ENCODE measurements at regions of chr11 and their contacts with region 1.

Region 1: DNA sequence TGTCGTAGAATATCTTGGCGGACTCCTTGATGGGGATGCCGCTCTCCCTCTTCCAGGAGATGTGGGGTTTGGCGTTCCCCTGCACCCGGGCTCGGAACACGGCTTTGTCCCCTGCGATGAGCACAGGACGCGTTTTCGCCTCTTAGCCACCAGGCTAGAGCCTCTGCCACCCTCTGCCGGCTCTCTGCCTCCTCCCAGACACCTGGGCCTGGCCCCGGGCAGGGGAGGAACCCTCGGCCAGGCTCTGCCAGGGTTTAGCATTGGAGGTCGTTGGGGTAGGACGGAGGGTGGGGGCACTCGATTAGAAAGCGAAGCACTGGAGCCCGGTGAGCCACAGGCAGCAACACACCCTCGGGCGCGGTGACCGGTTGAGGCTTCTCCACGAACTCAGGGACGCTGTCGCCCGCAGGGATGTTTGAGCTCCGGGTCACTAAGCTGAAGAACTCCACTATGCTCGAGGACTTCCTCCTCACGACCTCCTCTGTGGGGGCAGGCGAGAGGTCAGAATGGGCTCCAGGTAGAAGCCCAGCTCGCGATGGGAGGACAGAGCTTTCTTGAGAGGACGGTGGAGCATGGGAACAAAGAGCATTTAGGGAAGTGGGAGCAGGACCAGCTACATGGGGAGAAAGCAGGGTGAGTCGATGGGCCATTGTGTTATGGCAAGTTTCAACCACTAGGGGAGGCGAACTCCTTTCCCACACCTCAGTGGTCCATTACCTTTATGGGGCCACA is 4.3 kb downstream of the IGSF22 start:
- DNase-seq: peak; percentile 55
- H3K4me3 Mint-ChIP-seq: peak overlapping the region; percentile 73
- H3K27ac Mint-ChIP-seq: no peak overlapping the region
- H3K4me1 Mint-ChIP-seq: peaks cover 3% of the 10 kb centered on the region
- H3K27me3 Mint-ChIP-seq: peaks cover 8% of the 10 kb centered on the region

Region 2: DNA sequence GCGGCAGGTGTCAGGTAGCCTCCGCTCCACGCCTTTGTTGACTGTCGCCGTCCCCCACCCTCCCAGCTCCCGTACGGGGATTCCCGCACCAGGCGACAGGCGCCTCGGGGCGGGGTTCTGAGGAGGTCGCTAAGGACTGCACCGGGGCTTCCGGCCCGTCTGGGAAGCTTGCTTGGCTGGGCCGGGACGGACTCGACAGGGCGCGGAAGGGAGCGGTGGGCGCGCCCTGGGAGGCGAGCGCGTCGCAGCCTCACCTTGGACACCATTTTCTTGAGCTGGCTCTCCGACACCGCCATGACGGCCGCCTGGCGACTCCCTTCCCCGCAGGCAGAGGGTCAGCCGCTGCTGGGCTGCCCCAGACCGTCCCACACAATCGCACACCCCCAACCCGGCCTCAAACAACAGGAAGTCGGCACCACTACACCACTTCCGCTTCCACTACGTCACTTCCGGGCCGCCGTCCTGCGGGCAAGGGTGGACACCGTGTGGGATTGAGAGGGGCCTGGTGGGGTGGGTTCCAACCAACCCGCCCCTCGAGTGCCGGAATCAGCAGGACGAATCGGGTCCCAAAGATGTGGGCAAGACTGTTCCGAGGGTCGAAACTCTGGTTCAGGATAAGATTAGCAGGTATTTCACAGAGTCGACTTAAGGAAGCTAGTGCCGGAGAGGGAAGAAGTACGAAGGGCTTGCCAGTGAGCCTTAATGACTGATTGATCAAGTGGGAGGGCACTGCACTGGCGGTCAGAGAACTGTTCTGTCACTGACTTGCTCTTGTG is 195.0 kb before region 1 on chr11 and contains the start of gene TSG101:
- CTCF ChIA-PET with region 1: interaction called, 13 read pairs
- POLR2A ChIA-PET with region 1: no interaction called
- DNase-seq: peak; percentile 93
- H3K4me3 Mint-ChIP-seq: peak within 1 kb of the TSS; percentile 97
- H3K27ac Mint-ChIP-seq: peak within 1 kb of the TSS; percentile 99
- H3K4me1 Mint-ChIP-seq: peaks cover 42% of the 10 kb centered on the region
- H3K27me3 Mint-ChIP-seq: no peaks in the 10 kb centered on the region
- total RNA-seq, gene TSG101: 33.1 to 53.9 TPM

Region 3: DNA sequence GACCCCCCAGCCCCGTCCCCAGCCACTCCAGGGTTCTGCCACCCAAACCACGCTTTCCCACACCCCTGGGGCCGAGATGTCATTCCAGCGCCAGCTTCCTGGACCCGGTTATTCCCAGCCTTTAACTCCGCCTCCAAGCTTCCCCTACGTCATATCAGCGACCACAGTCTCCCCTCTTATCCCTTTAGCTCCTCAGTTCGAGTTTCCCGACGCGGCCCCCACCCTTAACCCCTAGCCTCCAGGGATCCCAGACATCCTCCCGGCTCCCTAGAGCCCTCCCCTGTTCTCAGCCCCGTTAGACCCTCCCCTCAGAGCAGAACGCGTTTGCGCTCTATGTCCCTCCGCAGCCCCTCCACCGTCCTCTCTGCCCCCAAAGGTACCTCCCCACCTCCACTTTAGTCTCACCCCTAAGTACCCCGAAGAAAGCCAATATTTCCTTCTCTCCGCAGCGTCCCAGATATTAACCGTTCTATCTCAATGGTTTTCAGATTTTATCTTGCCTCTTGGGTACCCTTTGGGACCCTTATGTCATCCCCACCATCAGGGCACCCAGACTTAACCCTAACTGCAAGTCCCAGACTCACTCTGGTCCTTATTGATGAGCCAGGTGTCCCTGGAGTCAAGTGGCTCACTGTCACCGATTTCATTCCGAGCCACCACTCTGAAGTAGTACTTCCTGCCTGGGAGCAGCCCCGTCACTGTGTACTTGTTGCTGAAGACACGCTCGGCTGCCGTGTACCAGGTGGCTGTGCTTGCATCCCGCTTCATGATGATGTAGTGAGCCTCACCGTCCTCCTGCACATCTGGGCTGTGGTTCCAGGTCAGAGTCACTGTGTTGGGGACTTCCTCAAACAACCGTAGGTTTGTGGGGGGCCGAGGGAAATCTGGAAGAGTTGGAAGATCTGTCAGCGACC is 15.1 kb before region 1 on chr11:
- CTCF ChIA-PET with region 1: interaction called, 24 read pairs
- POLR2A ChIA-PET with region 1: no interaction called
- DNase-seq: peak; percentile 43
- H3K4me3 Mint-ChIP-seq: peak overlapping the region; percentile 15
- H3K27ac Mint-ChIP-seq: no peak overlapping the region
- H3K4me1 Mint-ChIP-seq: peaks cover 14% of the 10 kb centered on the region
- H3K27me3 Mint-ChIP-seq: peaks cover 46% of the 10 kb centered on the region

Region 4: DNA sequence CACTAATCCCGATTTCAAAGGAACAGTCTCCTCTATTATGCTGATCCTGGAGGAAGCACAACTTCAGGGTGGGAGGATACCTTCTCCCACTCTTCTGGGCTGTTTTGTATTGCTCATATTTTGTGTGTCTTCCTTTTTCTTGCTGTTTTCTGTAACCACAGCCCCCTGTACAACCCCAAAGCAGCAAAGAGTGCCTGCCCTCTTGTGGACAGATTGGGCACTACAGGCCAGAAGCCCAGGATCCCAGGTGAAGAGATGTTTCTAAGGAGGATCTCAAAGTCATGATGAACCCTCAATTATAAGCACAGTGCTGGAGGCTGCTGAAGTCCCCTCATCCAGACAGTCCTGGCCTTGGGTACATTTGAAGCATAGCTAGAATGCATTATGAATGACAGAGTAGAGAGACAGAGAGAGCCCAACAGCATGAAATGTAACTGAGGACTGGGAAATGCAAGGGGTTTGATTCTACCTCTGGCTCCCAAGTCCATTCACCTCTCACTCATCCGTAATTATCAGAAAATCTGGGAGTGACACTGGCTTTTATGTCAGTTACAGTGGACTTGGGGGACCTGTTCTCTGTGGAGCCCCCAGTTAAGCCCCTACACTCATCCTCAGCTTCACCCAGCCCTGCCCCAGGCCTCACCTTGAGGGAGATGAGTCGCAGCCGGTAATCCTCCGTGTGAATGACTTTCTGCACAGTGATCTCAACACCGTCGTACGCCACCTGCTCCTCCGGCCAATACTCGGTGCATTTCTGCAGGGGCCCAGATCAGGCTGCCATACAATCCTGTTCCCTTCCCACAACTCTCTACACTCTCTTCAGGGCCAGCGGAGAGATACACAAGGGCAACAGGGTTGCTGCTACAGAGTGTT is 10.5 kb after region 1 on chr11:
- CTCF ChIA-PET with region 1: interaction called, 18 read pairs
- POLR2A ChIA-PET with region 1: no interaction called
- DNase-seq: peak; percentile 71
- H3K4me3 Mint-ChIP-seq: no peak overlapping the region
- H3K27ac Mint-ChIP-seq: no peak overlapping the region
- H3K4me1 Mint-ChIP-seq: peaks cover 5% of the 10 kb centered on the region
- H3K27me3 Mint-ChIP-seq: no peaks in the 10 kb centered on the region

Region 5: DNA sequence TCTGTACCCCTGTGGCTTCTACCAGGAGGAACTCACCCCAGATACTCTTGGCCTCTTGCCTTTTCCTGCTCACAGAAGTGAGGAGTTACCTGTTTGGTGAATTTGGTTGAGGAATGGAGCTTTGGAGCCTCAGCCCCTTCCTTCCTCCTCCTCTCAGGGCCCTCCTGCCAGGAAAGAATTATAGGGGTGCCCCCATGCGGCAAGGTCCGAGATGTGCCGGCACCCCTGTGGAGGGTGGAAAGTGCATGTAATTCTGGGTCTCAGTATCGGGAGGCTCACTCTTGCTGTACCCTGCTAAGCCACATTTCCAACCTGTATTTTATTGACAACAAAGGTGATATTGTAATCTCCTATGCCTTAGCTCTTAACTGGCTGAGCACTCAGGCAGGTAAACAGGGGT is 18.0 kb after region 1 on chr11:
- CTCF ChIA-PET with region 1: interaction called, 10 read pairs
- POLR2A ChIA-PET with region 1: no interaction called
- DNase-seq: no peak
- H3K4me3 Mint-ChIP-seq: no peak overlapping the region
- H3K27ac Mint-ChIP-seq: no peak overlapping the region
- H3K4me1 Mint-ChIP-seq: no peaks in the 10 kb centered on the region
- H3K27me3 Mint-ChIP-seq: no peaks in the 10 kb centered on the region

Measured in activated CD4-positive, alpha-beta T cell treated with anti-CD3 and anti-CD28 coated beads, Interleukin-2, amount 10 ng/mL, durations not matched to agents 7 days and 5 days (primary cell).